ENCODE measurements at regions of chr12 and their contacts with region 1.

Region 1: DNA sequence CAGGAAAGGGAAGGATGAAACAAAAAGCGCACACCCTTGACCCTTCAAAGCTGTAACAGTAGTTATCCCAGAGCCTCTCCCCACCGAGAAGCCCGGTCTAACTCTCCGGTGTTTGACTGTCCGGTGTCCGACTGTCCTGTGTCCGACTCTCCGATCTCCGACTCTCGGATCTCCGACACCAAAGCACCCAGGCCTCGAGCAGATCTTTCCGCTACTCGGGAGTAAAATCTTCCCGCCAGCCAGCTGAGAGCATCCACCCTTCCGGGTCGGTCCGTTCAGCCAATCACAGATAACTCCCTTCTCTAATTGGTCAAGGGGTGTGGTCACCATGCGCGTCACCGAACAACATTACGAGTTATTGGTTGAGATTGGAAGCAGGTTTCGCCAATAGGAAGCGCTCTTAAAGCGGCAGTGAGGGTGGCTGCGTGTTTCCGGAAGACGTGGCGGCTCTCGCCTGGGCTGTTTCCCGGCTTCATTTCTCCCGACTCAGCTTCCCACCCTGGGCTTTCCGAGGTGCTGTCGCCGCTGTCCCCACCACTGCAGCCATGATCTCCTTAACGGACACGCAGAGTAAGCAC is at the starts of genes GOLT1B and RECQL:
- DNase-seq: peak; percentile 96 to 97
- H3K4me3 ChIP-seq: peak within 1 kb of the TSS; percentile 80 to 93
- H3K27ac ChIP-seq: peak within 1 kb of the TSS; percentile 90 to 91
- H3K4me1 ChIP-seq: peaks cover 0 to 40% (median 27%) of the 10 kb centered on the region in 4 donors
- H3K27me3 ChIP-seq: no peaks in the 10 kb centered on the region
- CTCF ChIP-seq: no peak

Region 2: GRCh38 chr12:21662122-21662792 is 160.8 kb after region 1 on chr12:
- intact Hi-C with region 1: loop called (anchors 5 kb)
- DNase-seq: no peak
- H3K4me3 ChIP-seq: no peak overlapping the region
- H3K27ac ChIP-seq: no peak overlapping the region
- H3K4me1 ChIP-seq: no peaks in the 10 kb centered on the region
- H3K27me3 ChIP-seq: no peaks in the 10 kb centered on the region
- CTCF ChIP-seq: no peak

Region 3: GRCh38 chr12:21683115-21683514 is 181.6 kb after region 1 on chr12:
- intact Hi-C with region 1: loop called (anchors 5 kb)
- DNase-seq: no peak
- H3K4me3 ChIP-seq: no peak overlapping the region
- H3K27ac ChIP-seq: no peak overlapping the region
- H3K4me1 ChIP-seq: peaks cover 0 to 3% (median 1%) of the 10 kb centered on the region in 4 donors
- H3K27me3 ChIP-seq: no peaks in the 10 kb centered on the region
- CTCF ChIP-seq: no peak

Measured in tibial artery (tissue), 4 donors.